Left cardiac atrium (tissue), 4 donors: ENCODE measurements at regions of chr6 and their contacts with region 1.

Region 1: DNA sequence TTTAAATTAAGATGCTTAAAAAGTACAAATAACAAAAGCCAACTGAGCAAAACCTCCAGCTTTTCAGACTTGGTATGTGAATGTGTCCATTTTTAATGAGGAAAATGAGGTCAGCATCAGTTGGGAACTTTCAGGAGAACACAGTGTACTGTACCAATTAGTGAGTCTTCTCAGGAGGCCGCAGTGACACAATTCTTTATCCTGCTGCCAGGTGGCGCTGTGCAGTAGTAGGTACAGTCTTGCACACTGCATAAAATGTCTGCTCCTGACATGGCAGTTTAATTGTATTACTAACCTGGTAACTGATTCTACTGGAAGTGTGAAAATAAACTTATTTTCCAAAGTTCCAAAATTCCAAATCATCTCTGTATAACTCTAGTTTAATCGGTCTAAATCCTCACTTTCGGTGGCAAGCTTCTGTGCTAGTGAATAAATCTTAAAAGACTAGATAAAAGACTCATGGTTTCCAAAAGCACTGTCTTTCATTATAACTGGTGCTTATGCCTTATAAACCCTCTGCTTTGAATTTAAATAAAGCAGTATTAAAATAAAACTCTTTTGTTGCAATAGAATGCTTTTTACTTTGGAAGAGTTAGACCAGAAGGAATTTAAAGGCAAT is 214.8 kb upstream of the MMS22L start:
- DNase-seq: peak; percentile 57
- ATAC-seq: peak; percentile 90 to 91

Region 2: GRCh38 chr6:98039869-98040607 is 542.2 kb after region 1 on chr6:
- intact Hi-C with region 1: loop called in 1 of 2 experiments (anchors 5 kb)
- DNase-seq: no peak
- ATAC-seq: no peak

Region 3: DNA sequence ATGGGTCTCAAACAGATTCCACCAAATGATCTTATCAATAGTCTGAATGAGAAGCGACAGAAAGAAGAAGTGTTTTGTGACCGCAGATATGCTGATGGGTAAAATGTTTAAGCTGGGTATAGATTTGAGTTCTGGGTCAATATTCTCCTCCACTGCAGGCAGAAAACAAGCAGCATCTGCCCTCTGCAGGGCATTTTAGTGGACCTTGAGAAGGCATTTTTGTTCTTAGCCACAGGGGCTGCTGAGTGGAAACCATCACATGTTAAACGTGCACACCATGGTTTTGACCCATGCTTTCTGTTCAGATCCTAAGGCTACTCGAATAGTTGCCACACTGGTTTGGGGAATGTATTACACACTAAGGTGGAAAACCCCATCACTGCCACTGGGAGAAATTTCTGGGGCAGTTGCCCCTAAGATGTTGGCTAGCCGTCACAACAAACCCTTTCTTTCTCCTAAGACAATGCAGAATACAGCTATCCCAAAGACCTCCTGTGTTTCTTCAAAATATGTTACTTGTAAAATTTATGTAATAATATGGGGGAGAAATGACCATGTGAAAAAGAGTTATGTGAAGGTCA is 1342.0 kb after region 1 on chr6:
- intact Hi-C with region 1: loop called in 1 of 2 experiments (anchors 5 kb)
- DNase-seq: no peak
- ATAC-seq: no peak

Region 4: GRCh38 chr6:99119109-99120031 is 1621.5 kb after region 1 on chr6:
- intact Hi-C with region 1: loop called in 1 of 2 experiments (anchors 5 kb)
- DNase-seq: no peak
- ATAC-seq: peak in 1 of 2 donors; percentile 45